ENCODE measurements at regions of chr20 and their contacts with region 1.

Region 1: DNA sequence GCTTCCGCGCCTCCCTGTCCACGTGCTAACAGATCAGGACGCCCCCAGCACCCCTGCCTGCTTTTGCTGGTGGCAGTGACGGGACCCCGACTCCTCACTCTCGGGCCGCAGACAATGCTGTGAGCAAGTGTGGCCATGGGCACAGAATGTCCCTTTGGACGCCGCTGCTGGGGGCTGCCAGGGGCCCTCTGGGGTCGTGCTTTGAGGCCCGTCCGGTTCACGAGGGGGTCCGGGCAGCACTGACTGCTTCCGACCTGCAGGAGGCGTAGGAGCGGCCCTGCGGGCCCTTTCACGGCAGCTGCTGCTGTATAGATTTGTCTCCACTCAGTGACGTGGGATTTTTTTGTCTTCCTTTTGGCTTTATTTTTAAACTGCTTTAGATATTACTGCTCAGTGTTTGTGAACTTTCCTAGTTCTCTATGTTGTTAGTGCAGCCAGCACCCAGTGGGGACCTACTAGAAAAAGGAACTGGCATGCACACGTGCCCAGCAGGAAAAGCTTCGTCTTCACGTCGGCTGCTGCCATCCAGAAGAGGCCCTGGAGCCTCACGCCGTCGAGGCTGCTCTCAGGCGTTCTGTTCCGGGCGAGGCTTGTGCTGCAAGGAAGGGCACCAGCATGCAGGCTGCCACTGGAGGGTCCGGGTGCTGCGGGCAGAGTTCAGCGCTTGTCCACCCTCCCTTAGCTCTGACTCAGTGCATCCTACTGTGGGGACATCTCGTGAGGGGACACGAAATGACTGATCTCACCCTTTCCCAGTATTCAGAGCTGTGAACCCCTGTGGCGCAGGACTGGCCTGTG is 21.7 kb downstream of the UCKL1 start:
- DNase-seq: no peak
- ATAC-seq: peak in 1 of 4 donors; percentile 6
- H3K4me3 ChIP-seq: no peak overlapping the region
- H3K27ac ChIP-seq: no peak overlapping the region
- H3K4me1 ChIP-seq: no peaks in the 10 kb centered on the region
- H3K27me3 ChIP-seq: no peaks in the 10 kb centered on the region
- CTCF ChIP-seq: no peak
- POLR2A ChIP-seq: no peak

Region 2: GRCh38 chr20:63807654-63808434 is 126.6 kb before region 1 on chr20:
- intact Hi-C with region 1: no loop called
- DNase-seq: no peak
- ATAC-seq: peak in 1 of 4 donors; percentile 33
- H3K4me3 ChIP-seq: no peak overlapping the region
- H3K27ac ChIP-seq: no peak overlapping the region
- H3K4me1 ChIP-seq: no peaks in the 10 kb centered on the region
- H3K27me3 ChIP-seq: no peaks in the 10 kb centered on the region
- CTCF ChIP-seq: no peak
- POLR2A ChIP-seq: no peak

Region 3: DNA sequence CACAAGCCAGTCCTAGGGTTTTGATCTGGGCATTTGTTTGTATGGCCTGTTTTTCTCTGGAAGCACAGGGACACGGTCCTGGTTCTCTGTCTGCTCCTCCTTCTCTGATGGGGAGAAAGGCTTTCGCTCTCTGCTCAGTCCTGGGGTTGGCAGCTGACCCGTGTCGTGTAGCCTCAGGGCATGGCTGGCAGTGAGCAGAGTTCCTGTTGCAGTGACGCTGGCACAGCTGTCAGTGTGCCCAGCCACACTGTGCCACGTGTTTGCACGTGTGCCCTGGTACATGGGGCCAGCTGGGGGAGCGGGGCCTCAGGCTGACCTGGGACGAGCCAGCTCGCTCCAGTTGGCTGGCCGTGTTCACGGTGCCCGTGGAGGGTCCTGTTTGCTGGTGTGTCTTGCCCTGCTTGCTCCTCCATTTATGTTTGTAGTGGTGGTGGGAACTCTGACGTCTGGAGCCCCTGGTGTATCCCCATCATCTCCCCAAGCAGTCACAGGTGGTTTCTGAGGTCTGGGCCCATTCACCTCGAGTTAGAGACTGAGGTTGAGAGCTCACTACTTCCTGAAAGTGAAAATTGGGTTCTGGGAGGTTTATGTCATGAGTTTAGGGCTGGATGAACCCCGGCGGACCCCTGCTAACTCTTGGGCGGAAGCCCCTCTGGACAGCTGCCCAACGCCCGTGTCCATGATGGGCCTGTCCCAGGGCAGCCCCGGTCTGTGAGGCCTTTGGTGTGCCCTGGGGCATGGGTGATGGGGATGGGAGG is 49.8 kb before region 1 on chr20:
- intact Hi-C with region 1: loop called in 1 of 2 experiments (anchors 10 kb)
- DNase-seq: peak; percentile 54 to 93 (median 83)
- ATAC-seq: peak; percentile 81 to 92 (median 88)
- H3K4me3 ChIP-seq: no peak overlapping the region
- H3K27ac ChIP-seq: peak overlapping the region in 1 of 3 donors; percentile 38
- H3K4me1 ChIP-seq: peaks cover 0 to 5% (median 0%) of the 10 kb centered on the region in 4 donors
- H3K27me3 ChIP-seq: no peaks in the 10 kb centered on the region
- CTCF ChIP-seq: no peak
- POLR2A ChIP-seq: peak; percentile 45